ENCODE measurements at regions of chr1 and their contacts with region 1.

Region 1: DNA sequence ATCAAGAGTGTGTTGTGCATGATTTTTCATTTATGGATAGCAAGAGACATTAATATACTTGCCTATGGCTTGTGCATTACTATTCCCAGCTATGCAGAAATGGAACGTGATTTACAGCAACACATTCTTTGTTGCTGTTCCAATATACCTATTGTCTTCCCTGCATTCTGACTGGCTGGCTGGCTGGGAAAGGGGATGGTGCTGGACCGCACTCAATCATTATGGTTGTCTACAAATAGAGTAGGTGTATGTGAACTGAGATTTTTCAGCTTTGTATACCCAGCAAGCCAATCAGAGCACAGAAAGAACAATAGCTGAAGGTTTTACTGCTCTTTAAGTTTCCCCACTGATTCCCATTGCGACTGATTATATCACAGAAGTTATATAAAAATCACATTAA is 167.5 kb downstream of the ATG4C start:
- DNase-seq: no peak
- ATAC-seq: no peak
- H3K4me3 ChIP-seq: no peak overlapping the region
- H3K4me3 Mint-ChIP-seq: no peak overlapping the region
- H3K27ac ChIP-seq: no peak overlapping the region
- H3K27ac Mint-ChIP-seq: no peak overlapping the region
- H3K4me1 ChIP-seq: no peaks in the 10 kb centered on the region
- H3K4me1 Mint-ChIP-seq: no peaks in the 10 kb centered on the region
- H3K27me3 ChIP-seq: no peaks in the 10 kb centered on the region
- H3K27me3 Mint-ChIP-seq: peaks cover 8% of the 10 kb centered on the region
- CTCF ChIP-seq: no peak

Region 2: GRCh38 chr1:62391369-62391971 is 560.0 kb before region 1 on chr1:
- CTCF ChIA-PET with region 1: no interaction called
- POLR2A ChIA-PET with region 1: interaction called, 10 read pairs
- intact Hi-C with region 1: no loop called
- DNase-seq: peak in 4 of 9 experiments; percentile 9 to 44 (median 25)
- ATAC-seq: no peak
- H3K4me3 ChIP-seq: no peak overlapping the region
- H3K4me3 Mint-ChIP-seq: no peak overlapping the region
- H3K27ac ChIP-seq: no peak overlapping the region
- H3K27ac Mint-ChIP-seq: no peak overlapping the region
- H3K4me1 ChIP-seq: no peaks in the 10 kb centered on the region
- H3K4me1 Mint-ChIP-seq: no peaks in the 10 kb centered on the region
- H3K27me3 ChIP-seq: no peaks in the 10 kb centered on the region
- H3K27me3 Mint-ChIP-seq: peaks cover 9% of the 10 kb centered on the region
- CTCF ChIP-seq: no peak